ENCODE measurements at regions of chr22 and their contacts with region 1.

Region 1: DNA sequence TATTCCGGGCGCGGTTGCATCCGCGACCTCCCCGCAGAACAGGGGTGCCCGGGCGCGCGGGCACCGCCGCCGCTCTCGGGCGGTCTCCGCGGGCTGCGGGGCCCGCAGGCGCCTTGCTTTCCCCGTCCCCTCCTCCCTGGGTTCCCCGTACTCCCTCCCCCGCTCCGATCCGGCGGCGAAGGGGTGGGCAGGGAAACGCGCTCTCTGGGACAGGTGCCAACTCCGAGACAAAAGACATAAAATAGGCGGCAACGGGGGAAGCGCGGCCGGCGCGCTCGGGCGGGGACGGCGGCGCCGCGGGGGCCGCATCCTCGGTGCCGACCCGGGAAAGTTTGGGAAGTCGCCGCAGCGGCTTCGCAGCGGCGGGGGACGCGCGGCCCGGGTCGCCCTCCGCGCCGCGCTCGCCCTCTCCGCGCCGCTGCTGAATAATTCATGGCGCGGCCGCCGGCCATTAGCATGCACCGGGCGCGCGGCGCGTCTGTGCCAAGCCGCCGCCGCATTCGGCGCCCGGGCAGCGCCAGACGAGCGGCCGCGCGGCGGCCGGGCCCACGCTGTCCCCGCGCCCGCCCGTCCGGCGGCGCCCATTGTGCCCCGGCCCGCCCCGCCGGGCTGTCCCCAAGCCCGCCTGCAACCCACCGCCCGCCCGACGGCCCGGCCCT is 78.7 kb upstream of the PPARA start:
- DNase-seq: peak; percentile 22
- H3K4me3 Mint-ChIP-seq: peak overlapping the region; percentile 85
- H3K27ac Mint-ChIP-seq: peak overlapping the region; percentile 92
- H3K4me1 Mint-ChIP-seq: peaks cover 30% of the 10 kb centered on the region
- H3K27me3 Mint-ChIP-seq: peaks cover 5% of the 10 kb centered on the region

Region 2: GRCh38 chr22:46013460-46014416 is 57.8 kb before region 1 on chr22:
- intact Hi-C with region 1: loop called (anchors 1 kb)
- DNase-seq: peak; percentile 66
- H3K4me3 Mint-ChIP-seq: peak overlapping the region; percentile 87
- H3K27ac Mint-ChIP-seq: peak overlapping the region; percentile 82
- H3K4me1 Mint-ChIP-seq: peaks cover 6% of the 10 kb centered on the region
- H3K27me3 Mint-ChIP-seq: peaks cover 12% of the 10 kb centered on the region

Region 3: DNA sequence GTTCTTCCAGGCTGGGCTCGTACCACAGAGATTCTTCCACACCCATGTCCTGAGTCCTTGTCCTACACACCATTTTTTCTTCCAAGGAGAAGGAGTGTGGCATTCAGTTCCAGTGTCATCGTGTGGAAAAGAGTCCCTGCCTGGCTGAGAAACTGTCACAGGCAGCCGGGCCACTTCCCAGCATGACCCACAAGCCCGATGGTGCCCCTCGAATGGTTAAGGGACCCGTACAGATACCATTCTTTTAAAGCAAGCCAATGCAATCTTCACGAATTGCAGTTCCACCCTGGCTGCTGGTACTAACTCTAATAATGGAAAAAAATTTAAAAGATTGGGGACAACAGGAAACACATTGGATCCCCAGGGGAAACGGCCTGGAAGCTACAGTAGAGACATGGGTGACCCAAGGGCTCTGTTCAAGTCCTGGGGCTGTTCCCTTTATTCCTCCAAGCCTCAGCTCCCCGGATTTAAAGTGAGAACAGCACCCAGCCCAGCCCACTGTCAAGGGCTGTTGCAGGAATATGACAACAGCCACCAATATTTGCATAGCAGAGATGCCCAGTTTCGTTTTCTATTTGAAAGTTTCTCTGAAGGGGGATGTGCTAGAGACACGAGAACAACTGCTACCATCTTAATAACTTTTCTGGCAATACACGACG is 13.7 kb before region 1 on chr22:
- intact Hi-C with region 1: loop called (anchors 1 kb)
- DNase-seq: peak; percentile 44
- H3K4me3 Mint-ChIP-seq: peak overlapping the region; percentile 34
- H3K27ac Mint-ChIP-seq: peak overlapping the region; percentile 76
- H3K4me1 Mint-ChIP-seq: peaks cover 49% of the 10 kb centered on the region
- H3K27me3 Mint-ChIP-seq: no peaks in the 10 kb centered on the region

Measured in activated T-helper 1 cell treated with anti-CD3 and anti-CD28 coated beads, Interleukin-12 subunit alpha, Interleukin-12 subunit beta, Interleukin-2, Interleukin-4 antibody, amounts not matched to agents 30 ng/mL and 10 ng/mL and 1 ng/mL, durations not matched to agents 14 hours and 24 hours and 36 hours (primary cell).